ENCODE measurements at regions of chr12 and their contacts with region 1.

Region 1: DNA sequence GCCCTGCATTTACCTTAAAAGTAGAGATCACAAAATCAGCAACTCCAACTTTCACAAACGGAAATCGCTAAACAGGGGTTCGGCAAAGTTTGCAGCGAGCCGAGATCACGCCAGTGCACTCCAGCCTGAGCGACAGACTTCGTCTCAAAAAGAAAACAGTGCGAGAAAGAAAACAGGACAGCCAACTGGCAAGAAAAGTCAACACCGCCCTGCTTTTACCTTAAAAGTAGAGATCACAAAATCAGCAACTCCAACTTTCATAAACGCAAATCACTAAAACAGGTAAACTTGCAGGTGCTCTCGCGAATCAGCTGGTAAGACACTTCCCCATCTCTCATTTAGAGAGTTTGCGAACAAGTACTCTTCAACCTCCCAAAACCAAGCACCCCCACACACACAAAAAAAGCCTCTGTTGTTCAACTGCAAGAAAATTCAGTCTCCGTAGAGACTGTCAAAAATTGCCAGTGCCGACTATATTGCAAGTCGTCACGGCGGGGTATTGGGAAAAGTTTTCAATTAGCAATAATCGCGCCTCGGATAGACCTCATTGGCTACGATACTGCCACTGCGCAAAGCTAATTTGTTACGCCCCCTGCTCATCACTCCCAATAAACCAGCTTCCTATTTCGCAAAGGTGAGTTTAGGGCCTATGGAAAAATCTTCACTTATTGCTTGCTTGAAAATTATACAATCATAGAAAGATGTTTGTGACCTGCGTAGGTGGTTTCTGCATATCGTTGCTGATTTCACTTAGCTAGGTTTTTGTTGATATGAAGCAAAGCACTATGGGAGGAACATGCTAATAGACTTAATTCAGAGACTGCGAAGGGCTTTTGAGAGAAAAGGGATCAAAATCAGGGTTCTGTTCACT is at the start of gene RNU4-1:
- DNase-seq: peak; percentile 88
- H3K4me3 ChIP-seq: peak within 1 kb of the TSS; percentile 54 to 66 (median 57)
- H3K27ac ChIP-seq: peak within 1 kb of the TSS; percentile 92 to 98 (median 94)
- H3K4me1 ChIP-seq: peaks cover 0 to 12% (median 5%) of the 10 kb centered on the region in 4 donors
- H3K27me3 ChIP-seq: no peaks in the 10 kb centered on the region
- CTCF ChIP-seq: no peak
- EP300 ChIP-seq: no peak
- POLR2A ChIP-seq: peak; percentile 60 to 81
- total RNA-seq, gene RNU4-1: under 0.01 TPM in 3 of 4 donors, not detected in the other

Region 2: DNA sequence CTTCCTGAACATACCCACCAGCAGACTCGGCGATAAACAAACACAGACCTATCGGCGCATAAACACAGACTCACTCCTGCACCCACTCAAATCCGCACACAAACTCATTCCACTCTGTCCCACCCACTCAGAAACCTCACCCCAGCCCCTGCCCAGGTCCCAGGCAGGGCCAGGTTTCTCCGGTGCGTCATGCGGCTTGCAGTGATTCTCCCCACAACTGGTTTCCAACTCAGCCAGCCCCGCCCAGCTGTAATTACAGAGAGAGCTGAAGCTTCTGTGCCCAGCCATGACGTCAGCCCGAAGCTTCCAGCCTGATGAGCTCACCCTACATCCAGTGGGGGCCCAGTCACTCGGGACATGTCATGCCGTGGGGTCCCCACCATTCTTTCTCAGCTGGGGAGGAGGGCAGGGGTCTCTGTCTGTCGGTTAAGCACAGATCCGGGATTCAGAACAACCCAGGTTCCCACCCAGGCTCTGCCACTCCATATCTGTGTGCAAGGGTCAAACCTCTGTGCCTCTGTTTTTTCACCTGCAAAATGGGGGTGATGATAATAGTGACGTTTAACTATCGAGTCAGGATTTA is 1116.5 kb before region 1 on chr12:
- intact Hi-C with region 1: loop called (anchors 10 kb)
- DNase-seq: peak; percentile 99
- H3K4me3 ChIP-seq: peak overlapping the region; percentile 20 to 55 (median 40)
- H3K27ac ChIP-seq: peak overlapping the region; percentile 91 to 99 (median 96)
- H3K4me1 ChIP-seq: peaks cover 0 to 19% (median 16%) of the 10 kb centered on the region in 4 donors
- H3K27me3 ChIP-seq: no peaks in the 10 kb centered on the region
- CTCF ChIP-seq: no peak
- EP300 ChIP-seq: peak in 2 of 4 donors; percentile 63 to 92
- POLR2A ChIP-seq: peak in 1 of 2 donors; percentile 41

Region 3: GRCh38 chr12:120228291-120229070 is 64.4 kb before region 1 on chr12:
- intact Hi-C with region 1: loop called (anchors 2 kb)
- DNase-seq: peak; percentile 94
- H3K4me3 ChIP-seq: peak overlapping the region in 2 of 4 donors; percentile 2 to 11
- H3K27ac ChIP-seq: peak overlapping the region; percentile 89 to 95 (median 92)
- H3K4me1 ChIP-seq: peaks cover 0 to 95% (median 87%) of the 10 kb centered on the region in 4 donors
- H3K27me3 ChIP-seq: no peaks in the 10 kb centered on the region
- CTCF ChIP-seq: peak; percentile 97 to 99 (median 98)
- EP300 ChIP-seq: no peak
- POLR2A ChIP-seq: no peak